ENCODE measurements at regions of chr22 and their contacts with region 1.

Region 1: DNA sequence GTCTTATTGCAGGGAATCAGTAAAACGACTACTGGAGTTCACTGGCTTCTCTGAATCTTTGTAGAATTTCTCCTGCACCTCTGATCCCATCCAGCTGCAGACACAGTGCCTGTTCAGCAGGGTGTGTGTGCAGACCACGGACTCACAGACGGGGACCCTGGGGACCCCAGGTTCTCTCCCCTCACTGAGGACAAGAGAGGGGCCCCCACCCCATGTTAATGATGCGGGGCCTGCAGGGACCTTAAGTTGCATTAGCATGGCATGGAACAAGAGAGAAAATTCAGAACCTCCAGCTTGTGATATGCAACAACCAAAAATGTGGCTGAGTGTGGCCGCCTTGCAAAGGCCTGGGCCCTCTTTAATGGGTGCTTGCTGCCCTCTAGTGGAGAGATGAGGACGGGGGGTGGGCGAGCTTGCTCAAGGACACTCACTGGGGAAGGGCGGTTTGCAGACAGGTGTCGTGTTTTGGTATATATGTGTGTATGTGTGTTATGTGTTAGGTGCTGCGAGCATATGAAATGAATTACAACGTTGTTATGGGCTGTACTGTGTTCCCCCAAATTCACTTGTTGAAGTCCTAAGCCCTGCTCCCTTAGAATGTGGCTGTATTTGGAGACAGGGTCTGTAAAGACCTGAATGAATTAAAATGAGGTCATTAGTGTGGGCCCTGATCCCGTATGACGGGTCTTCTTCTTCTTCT is 84.4 kb upstream of the SEPTIN5 start:
- DNase-seq: peak; percentile 74 to 91
- ATAC-seq: peak; percentile 83 to 96 (median 95)
- H3K4me3 ChIP-seq: no peak overlapping the region
- H3K4me3 Mint-ChIP-seq: no peak overlapping the region
- H3K27ac ChIP-seq: no peak overlapping the region
- H3K27ac Mint-ChIP-seq: no peak overlapping the region
- H3K4me1 ChIP-seq: no peaks in the 10 kb centered on the region
- H3K4me1 Mint-ChIP-seq: peaks cover 0 to 5% of the 10 kb centered on the region in 2 donors
- H3K27me3 ChIP-seq: no peaks in the 10 kb centered on the region
- H3K27me3 Mint-ChIP-seq: no peaks in the 10 kb centered on the region
- CTCF ChIP-seq: peak; percentile 94

Region 2: GRCh38 chr22:18954990-18955571 is 674.8 kb before region 1 on chr22:
- intact Hi-C with region 1: loop called (anchors 1 kb)
- DNase-seq: peak in 1 of 2 donors; percentile 14
- ATAC-seq: no peak
- H3K4me3 ChIP-seq: no peak overlapping the region
- H3K4me3 Mint-ChIP-seq: no peak overlapping the region
- H3K27ac ChIP-seq: no peak overlapping the region
- H3K27ac Mint-ChIP-seq: no peak overlapping the region
- H3K4me1 ChIP-seq: no peaks in the 10 kb centered on the region
- H3K4me1 Mint-ChIP-seq: no peaks in the 10 kb centered on the region
- H3K27me3 ChIP-seq: no peaks in the 10 kb centered on the region
- H3K27me3 Mint-ChIP-seq: peaks cover 0 to 2% of the 10 kb centered on the region in 2 donors
- CTCF ChIP-seq: no peak

Region 3: DNA sequence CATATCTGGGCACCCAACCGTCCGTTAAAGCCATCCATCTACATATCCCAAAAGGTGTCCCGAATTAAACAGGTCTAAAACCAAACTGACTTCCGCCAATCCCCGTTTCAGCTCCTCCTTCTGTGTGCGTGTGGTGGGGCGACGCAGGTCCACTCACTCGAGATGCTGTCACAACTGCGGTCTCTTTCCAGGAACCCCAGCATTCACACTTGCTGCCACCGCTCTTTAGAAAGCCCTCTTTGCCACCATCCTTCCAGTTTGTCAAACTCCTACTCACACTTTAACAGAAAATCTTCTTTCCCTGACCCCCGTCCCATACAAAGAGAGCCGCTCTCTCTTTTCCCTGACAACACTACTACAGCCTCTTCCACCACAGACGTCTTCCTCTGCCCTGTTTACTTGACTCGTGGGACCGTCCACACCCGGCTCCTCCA is 485.9 kb before region 1 on chr22:
- intact Hi-C with region 1: loop called (anchors 1 kb)
- DNase-seq: peak; percentile 51 to 64
- ATAC-seq: peak; percentile 38 to 52 (median 41)
- H3K4me3 ChIP-seq: peak overlapping the region; percentile 73
- H3K4me3 Mint-ChIP-seq: peak overlapping the region; percentile 100
- H3K27ac ChIP-seq: peak overlapping the region; percentile 86
- H3K27ac Mint-ChIP-seq: peak overlapping the region; percentile 99 to 100
- H3K4me1 ChIP-seq: peaks cover 14% of the 10 kb centered on the region
- H3K4me1 Mint-ChIP-seq: peaks cover 17 to 22% of the 10 kb centered on the region in 2 donors
- H3K27me3 ChIP-seq: peaks cover 5% of the 10 kb centered on the region
- H3K27me3 Mint-ChIP-seq: peaks cover 10 to 14% of the 10 kb centered on the region in 2 donors
- CTCF ChIP-seq: no peak

Region 4: GRCh38 chr22:19495562-19496323 is 134.1 kb before region 1 on chr22:
- intact Hi-C with region 1: loop called (anchors 1 kb)
- DNase-seq: peak in 1 of 2 donors; percentile 65
- ATAC-seq: no peak
- H3K4me3 ChIP-seq: no peak overlapping the region
- H3K4me3 Mint-ChIP-seq: no peak overlapping the region
- H3K27ac ChIP-seq: no peak overlapping the region
- H3K27ac Mint-ChIP-seq: no peak overlapping the region
- H3K4me1 ChIP-seq: no peaks in the 10 kb centered on the region
- H3K4me1 Mint-ChIP-seq: no peaks in the 10 kb centered on the region
- H3K27me3 ChIP-seq: no peaks in the 10 kb centered on the region
- H3K27me3 Mint-ChIP-seq: no peaks in the 10 kb centered on the region
- CTCF ChIP-seq: no peak